T-cell (primary cell): ENCODE measurements at regions of chr3 and their contacts with region 1.

Region 1: GRCh38 chr3:78013653-78014052 is 973.8 kb downstream of the ROBO2 start:
- DNase-seq: no peak
- ATAC-seq: no peak
- H3K4me3 ChIP-seq: no peak overlapping the region
- H3K4me3 Mint-ChIP-seq: no peak overlapping the region
- H3K27ac ChIP-seq: no peak overlapping the region
- H3K27ac Mint-ChIP-seq: no peak overlapping the region
- H3K4me1 ChIP-seq: no peaks in the 10 kb centered on the region
- H3K4me1 Mint-ChIP-seq: no peaks in the 10 kb centered on the region
- H3K27me3 ChIP-seq: no peaks in the 10 kb centered on the region
- H3K27me3 Mint-ChIP-seq: no peaks in the 10 kb centered on the region

Region 2: GRCh38 chr3:77699125-77699691 is 314.4 kb before region 1 on chr3:
- CTCF ChIA-PET with region 1: no interaction called
- POLR2A ChIA-PET with region 1: no interaction called
- DNase-seq: no peak
- ATAC-seq: no peak
- H3K4me3 ChIP-seq: no peak overlapping the region
- H3K4me3 Mint-ChIP-seq: no peak overlapping the region
- H3K27ac ChIP-seq: no peak overlapping the region
- H3K27ac Mint-ChIP-seq: no peak overlapping the region
- H3K4me1 ChIP-seq: no peaks in the 10 kb centered on the region
- H3K4me1 Mint-ChIP-seq: no peaks in the 10 kb centered on the region
- H3K27me3 ChIP-seq: no peaks in the 10 kb centered on the region
- H3K27me3 Mint-ChIP-seq: no peaks in the 10 kb centered on the region

Region 3: DNA sequence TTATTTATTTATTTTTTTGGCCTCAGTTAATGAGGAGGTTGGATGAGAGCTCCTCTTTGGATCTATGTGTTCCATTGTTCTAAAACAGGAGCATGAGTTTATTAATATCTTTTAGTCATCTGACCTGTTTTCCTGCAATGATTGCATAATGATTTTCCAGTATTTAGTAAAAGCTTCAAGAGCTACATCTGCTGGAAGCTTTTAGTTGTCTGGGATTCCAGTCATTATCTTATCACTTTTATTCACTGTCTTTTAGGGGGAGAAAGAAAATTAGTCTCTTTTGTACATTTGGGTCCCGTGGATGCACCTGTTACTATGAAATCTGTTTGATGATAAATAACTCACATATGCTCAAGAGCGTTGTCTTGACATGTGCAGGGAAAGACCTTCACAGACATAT is 484.1 kb after region 1 on chr3:
- CTCF ChIA-PET with region 1: no interaction called
- POLR2A ChIA-PET with region 1: interaction called in 1 of 2 experiments, 11 read pairs
- DNase-seq: no peak
- ATAC-seq: no peak
- H3K4me3 ChIP-seq: no peak overlapping the region
- H3K4me3 Mint-ChIP-seq: no peak overlapping the region
- H3K27ac ChIP-seq: no peak overlapping the region
- H3K27ac Mint-ChIP-seq: no peak overlapping the region
- H3K4me1 ChIP-seq: no peaks in the 10 kb centered on the region
- H3K4me1 Mint-ChIP-seq: no peaks in the 10 kb centered on the region
- H3K27me3 ChIP-seq: no peaks in the 10 kb centered on the region
- H3K27me3 Mint-ChIP-seq: no peaks in the 10 kb centered on the region